WTC11 (cell line): ENCODE measurements at regions of chr5 and their contacts with region 1.

Region 1: DNA sequence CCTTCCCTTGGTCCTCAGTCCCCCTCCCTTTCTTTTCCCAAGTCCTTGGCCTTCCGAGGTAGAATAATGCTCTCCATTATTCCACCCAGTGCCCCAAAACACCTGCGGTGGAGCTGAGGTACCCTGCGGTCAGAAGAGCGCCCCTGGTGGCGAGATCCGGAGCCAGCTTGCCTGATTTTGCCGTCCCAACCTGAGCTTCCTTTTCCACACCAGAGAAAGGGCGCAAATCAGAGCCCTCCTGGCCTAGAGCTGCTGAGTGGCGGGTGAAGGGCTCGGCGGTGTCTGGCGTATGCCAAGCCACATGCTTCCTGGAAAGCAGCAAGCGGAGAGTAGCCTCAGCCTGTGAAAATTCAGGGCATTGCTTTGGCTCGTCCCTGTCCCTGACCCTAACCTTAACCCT is 21.1 kb upstream of the CARTPT start:
- DNase-seq: peak; percentile 79
- ATAC-seq: peak; percentile 87
- H3K4me3 Mint-ChIP-seq: no peak overlapping the region
- H3K27ac Mint-ChIP-seq: no peak overlapping the region
- H3K4me1 Mint-ChIP-seq: peaks cover 34% of the 10 kb centered on the region
- H3K27me3 Mint-ChIP-seq: peaks cover 2% of the 10 kb centered on the region; the same call in 1 of the 2 replicates
- CTCF ChIP-seq: peak; percentile 90

Region 2: DNA sequence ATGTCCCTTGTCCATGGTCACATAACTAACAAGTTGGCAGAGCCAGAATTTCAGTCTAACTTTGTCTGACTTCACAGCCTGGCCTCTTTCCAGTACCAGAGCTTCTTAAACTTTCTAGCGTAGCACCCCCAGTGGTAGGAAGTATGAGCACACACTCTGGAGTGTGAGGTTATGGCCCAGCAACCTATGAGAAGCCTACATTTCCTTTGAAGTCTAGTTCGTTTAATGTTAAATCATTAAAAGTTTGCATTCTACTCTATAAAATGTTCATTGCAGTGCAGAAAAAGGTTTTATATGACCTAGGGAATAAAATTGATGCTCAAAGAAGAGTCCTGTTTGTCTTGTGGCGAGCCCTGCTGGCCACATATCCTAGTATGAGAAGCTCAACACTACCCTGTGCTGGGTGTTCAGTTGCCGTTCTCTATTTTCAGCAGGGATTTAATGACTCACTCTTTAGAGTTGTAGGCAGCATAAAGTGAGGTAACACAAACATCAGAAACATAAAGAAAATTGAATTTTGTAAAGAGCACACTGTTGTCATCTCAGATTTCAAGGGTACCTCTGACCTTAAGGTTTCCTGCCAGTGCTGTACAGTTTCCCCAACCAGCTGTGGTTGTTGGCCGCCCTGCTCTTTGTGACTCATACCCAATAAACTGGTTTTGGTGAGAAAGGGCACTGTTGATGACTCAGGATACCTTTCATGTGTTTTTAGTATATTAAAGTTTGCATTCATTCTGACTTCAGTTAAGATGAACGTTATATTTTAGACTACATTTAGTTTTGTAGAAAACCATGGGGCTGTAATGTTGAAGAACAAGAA is 96.5 kb before region 1 on chr5:
- CTCF ChIA-PET with region 1: interaction called, 10 read pairs
- POLR2A ChIA-PET with region 1: no interaction called
- DNase-seq: peak; percentile 32
- ATAC-seq: peak; percentile 99
- H3K4me3 Mint-ChIP-seq: no peak overlapping the region
- H3K27ac Mint-ChIP-seq: no peak overlapping the region
- H3K4me1 Mint-ChIP-seq: no peaks in the 10 kb centered on the region
- H3K27me3 Mint-ChIP-seq: no peaks in the 10 kb centered on the region
- CTCF ChIP-seq: peak; percentile 57

Region 3: DNA sequence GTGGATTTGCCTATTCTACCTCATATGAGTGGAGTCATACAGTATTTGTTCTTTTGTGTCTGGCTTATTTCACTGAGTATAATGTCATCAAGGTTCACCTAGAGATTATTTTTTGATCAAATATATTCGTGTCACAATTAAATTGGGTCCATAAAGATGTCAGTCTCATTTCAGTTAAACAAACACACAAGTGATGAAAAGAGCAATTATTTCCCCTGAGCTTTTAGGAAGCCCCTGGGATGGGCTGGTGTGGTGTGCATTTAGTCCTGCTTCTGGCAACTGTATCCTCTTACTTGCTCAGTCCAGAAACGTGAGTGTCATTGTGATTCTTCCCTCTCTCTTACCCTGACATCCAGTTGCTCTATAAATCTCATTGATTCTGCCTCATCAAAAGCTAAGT is 31.6 kb before region 1 on chr5:
- CTCF ChIA-PET with region 1: interaction called, 19 read pairs
- POLR2A ChIA-PET with region 1: no interaction called
- DNase-seq: no peak
- ATAC-seq: no peak
- H3K4me3 Mint-ChIP-seq: no peak overlapping the region
- H3K27ac Mint-ChIP-seq: no peak overlapping the region
- H3K4me1 Mint-ChIP-seq: peaks cover 7% of the 10 kb centered on the region
- H3K27me3 Mint-ChIP-seq: no peaks in the 10 kb centered on the region
- CTCF ChIP-seq: no peak

Region 4: DNA sequence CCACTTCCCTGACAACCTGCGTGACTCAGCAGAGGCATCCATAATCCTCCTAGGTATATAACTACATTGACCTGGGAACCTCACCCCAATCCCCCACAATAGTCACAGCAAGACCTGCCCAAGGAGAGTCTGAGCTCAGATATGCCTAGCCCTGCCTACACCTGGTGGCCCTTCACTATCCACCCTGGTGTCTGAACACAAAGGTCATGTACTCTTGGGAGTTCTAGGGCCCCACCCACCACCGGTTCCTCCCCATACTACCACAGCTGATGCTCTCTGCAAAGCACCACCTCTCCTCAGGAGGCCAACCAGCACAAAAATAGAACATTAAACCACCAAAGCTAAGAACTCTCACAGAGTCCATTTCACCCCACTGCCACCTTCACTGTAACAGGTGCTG is 13.7 kb before region 1 on chr5:
- CTCF ChIA-PET with region 1: interaction called, 11 read pairs
- POLR2A ChIA-PET with region 1: interaction called, 3 read pairs
- DNase-seq: no peak
- ATAC-seq: no peak
- H3K4me3 Mint-ChIP-seq: no peak overlapping the region
- H3K27ac Mint-ChIP-seq: no peak overlapping the region
- H3K4me1 Mint-ChIP-seq: no peaks in the 10 kb centered on the region
- H3K27me3 Mint-ChIP-seq: peaks cover 22% of the 10 kb centered on the region
- CTCF ChIP-seq: no peak

Region 5: DNA sequence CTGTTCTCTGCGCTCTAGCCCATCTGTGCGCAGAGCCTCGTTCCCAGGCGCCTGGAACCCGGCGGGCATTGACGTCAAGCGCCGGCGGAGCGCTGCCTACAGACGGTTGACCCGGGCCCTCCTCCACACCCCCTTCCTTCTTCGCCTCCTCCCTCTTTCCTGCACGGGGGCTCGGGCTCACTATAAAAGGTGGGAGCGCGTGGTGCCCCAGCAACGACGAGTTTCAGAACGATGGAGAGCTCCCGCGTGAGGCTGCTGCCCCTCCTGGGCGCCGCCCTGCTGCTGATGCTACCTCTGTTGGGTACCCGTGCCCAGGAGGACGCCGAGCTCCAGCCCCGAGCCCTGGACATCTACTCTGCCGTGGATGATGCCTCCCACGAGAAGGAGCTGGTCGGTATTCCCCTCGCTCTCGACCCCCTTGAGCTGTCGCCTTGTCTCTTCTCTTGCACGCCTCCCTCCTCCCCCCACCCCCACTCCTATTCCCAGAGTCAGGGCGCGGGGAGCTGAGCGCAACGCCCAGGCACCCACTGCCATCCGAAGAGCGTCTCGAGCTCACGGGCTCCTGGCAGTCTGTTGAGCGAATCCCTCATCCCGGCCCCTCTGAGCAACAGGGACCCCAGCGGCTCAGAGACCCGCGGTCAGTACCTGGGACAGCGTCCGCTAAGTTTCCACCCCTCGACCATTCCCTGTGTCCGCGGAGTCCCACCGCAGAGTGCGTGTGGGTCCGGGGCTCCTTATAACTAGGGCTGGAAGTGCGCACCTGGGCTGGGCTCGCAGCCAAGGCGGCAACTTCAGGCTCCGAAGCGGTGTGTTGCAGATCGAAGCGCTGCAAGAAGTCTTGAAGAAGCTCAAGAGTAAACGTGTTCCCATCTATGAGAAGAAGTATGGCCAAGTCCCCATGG is 21.3 kb after region 1 on chr5 and contains the start of gene CARTPT:
- CTCF ChIA-PET with region 1: interaction called, 19 read pairs
- POLR2A ChIA-PET with region 1: no interaction called
- DNase-seq: peak; percentile 80
- ATAC-seq: peak; percentile 92
- H3K4me3 Mint-ChIP-seq: peak within 1 kb of the TSS; percentile 65
- H3K27ac Mint-ChIP-seq: no peak within 1 kb of the TSS
- H3K4me1 Mint-ChIP-seq: peaks cover 10% of the 10 kb centered on the region
- H3K27me3 Mint-ChIP-seq: peaks cover 77% of the 10 kb centered on the region
- CTCF ChIP-seq: no peak
- total RNA-seq, gene CARTPT: not detected in 3 replicates